Heart left ventricle (tissue), 16 donors: ENCODE measurements at regions of chr16 and their contacts with region 1.

Region 1: GRCh38 chr16:4802659-4803287 is 340 bp upstream of the ROGDI start:
- DNase-seq: peak; percentile 94 to 96 (median 95)
- ATAC-seq: peak; percentile 89 to 94 (median 92)
- H3K4me3 ChIP-seq: peak overlapping the region; percentile 68 to 96 (median 86)
- H3K27ac ChIP-seq: peak overlapping the region; percentile 47 to 96 (median 90)
- H3K4me1 ChIP-seq: peaks cover 0 to 50% (median 25%) of the 10 kb centered on the region in 12 donors
- H3K27me3 ChIP-seq: no peaks in the 10 kb centered on the region
- CTCF ChIP-seq: peak in 8 of 12 donors; percentile 5 to 53 (median 32)
- POLR2A ChIP-seq: peak in 1 of 2 donors; percentile 53

Region 2: GRCh38 chr16:4766874-4767628 is 35.7 kb before region 1 on chr16 and contains the start of gene ZNF500:
- intact Hi-C with region 1: loop called in 6 of 10 experiments (anchors 1 to 5 kb)
- DNase-seq: peak; percentile 98 to 99 (median 98)
- ATAC-seq: peak; percentile 92 to 97 (median 96)
- H3K4me3 ChIP-seq: peak within 1 kb of the TSS; percentile 76 to 97 (median 89)
- H3K27ac ChIP-seq: peak within 1 kb of the TSS; percentile 45 to 90 (median 88)
- H3K4me1 ChIP-seq: peaks cover 9 to 37% (median 32%) of the 10 kb centered on the region in 12 donors
- H3K27me3 ChIP-seq: no peaks in the 10 kb centered on the region
- CTCF ChIP-seq: no peak
- POLR2A ChIP-seq: peak in 1 of 2 donors; percentile 82
- total RNA-seq, gene ZNF500: 4.8 to 11.6 (median 6.5) TPM

Region 3: DNA sequence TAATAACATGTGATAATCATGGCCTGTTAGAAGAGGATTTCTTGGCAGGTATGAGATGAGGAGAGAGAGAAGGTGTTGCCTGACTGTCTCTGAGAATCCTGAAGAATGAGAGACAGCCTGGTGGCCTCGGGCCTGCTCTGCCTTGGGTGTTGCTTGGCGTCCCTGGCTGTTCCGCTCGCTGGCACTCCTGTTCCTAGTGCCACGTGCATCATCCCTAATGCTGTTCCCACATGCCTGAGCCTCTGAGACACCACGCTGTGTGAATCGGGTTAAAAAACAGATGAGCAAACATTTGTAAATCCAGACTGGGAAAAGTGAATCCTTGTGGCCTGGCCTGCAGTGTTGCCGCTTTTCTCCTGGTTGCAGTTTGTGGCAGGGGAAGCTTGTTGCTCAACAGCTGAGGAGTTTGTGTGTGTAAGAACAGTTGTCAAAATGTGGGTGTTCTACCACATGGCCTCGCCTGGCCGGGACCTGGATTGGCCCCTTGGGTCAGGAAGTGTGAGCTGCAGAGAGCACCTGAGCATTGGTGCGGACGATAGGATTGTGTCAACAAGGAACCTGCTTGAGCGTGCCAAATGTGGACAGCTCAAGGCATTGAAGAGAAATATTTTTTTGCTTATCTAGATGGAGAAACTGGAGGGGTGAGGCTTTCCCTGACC is 66.5 kb after region 1 on chr16:
- intact Hi-C with region 1: no loop called
- DNase-seq: no peak
- ATAC-seq: peak; percentile 19 to 47 (median 31)
- H3K4me3 ChIP-seq: no peak overlapping the region
- H3K27ac ChIP-seq: no peak overlapping the region
- H3K4me1 ChIP-seq: peaks cover 0 to 36% (median 5%) of the 10 kb centered on the region in 12 donors
- H3K27me3 ChIP-seq: no peaks in the 10 kb centered on the region
- CTCF ChIP-seq: no peak
- POLR2A ChIP-seq: no peak